Vagina (tissue), 2 donors: ENCODE measurements at regions of chr20 and their contacts with region 1.

Region 1: GRCh38 chr20:63178889-63179686 is 36.8 kb downstream of the YTHDF1 start:
- DNase-seq: no peak
- H3K4me3 ChIP-seq: peak overlapping the region in 1 of 2 donors; percentile 28
- H3K27ac ChIP-seq: no peak overlapping the region
- H3K4me1 ChIP-seq: peaks cover 26% of the 10 kb centered on the region
- H3K27me3 ChIP-seq: peaks cover 36% of the 10 kb centered on the region
- CTCF ChIP-seq: no peak
- POLR2A ChIP-seq: no peak

Region 2: DNA sequence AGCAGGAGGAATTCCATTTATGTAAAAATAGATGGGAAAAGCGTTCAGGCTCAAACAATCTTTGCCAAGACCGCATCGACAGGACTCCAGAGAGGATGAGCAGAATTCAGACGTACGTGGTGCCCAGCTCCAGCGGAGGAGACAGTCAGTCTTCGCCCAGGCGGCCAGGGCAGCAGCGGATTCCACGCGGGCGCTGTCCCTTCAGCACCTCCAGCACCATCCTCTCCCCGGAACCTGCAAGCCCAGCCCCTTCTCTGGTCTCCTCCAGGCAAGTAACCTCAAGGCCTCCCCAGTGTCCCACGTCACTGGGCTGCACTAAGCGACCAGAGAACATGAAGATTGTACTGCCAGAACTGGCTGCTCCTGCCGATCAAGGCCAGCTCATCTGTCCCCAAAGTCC is 296.1 kb after region 1 on chr20:
- intact Hi-C with region 1: loop called (anchors 10 kb)
- DNase-seq: no peak
- H3K4me3 ChIP-seq: no peak overlapping the region
- H3K27ac ChIP-seq: no peak overlapping the region
- H3K4me1 ChIP-seq: peaks cover 13% of the 10 kb centered on the region
- H3K27me3 ChIP-seq: peaks cover 11% of the 10 kb centered on the region
- CTCF ChIP-seq: no peak
- POLR2A ChIP-seq: no peak